Activated T-helper 1 cell treated with anti-CD3 and anti-CD28 coated beads, Interleukin-12 subunit alpha, Interleukin-12 subunit beta, Interleukin-2, Interleukin-4 antibody, amounts not matched to agents 30 ng/mL and 10 ng/mL and 1 ng/mL, durations not matched to agents 14 hours and 24 hours and 36 hours (primary cell): ENCODE measurements at regions of chr4 and their contacts with region 1.

Region 1: GRCh38 chr4:176277162-176277904 is 8.3 kb upstream of the ASB5 start:
- DNase-seq: no peak
- H3K4me3 Mint-ChIP-seq: no peak overlapping the region
- H3K27ac Mint-ChIP-seq: no peak overlapping the region
- H3K4me1 Mint-ChIP-seq: no peaks in the 10 kb centered on the region
- H3K27me3 Mint-ChIP-seq: peaks cover 7% of the 10 kb centered on the region

Region 2: DNA sequence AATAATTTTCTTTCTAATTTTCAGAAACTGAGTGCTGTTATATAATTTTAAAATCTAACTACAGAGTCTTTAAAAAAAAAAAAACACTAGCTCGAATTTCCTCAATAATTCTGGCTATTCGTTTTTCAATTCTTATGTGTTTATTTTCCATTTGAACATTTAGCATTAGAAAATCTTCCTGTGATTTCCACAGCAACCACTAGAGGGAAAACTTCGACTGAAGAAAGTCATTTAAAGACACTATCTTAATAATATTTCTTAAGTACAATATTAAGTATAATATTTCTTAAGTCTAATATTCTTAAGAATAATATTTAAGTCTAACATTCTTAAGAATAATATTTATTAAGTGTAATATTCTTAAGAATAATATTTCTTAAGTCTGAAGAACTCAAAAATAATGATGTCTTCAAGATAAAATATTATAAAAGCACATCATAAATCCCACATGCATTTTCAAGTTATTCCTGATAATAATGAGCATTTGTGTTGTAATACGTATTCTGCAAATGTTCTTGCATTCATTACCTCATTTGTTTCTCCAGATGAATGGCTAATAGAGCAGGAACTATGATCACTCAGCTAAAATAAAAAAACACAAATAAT is 330.1 kb before region 1 on chr4:
- intact Hi-C with region 1: loop called (anchors 1 kb)
- DNase-seq: no peak
- H3K4me3 Mint-ChIP-seq: no peak overlapping the region
- H3K27ac Mint-ChIP-seq: no peak overlapping the region
- H3K4me1 Mint-ChIP-seq: peaks cover 8% of the 10 kb centered on the region
- H3K27me3 Mint-ChIP-seq: peaks cover 9% of the 10 kb centered on the region

Region 3: GRCh38 chr4:176150356-176150682 is 127.0 kb before region 1 on chr4:
- intact Hi-C with region 1: loop called (anchors 1 kb)
- DNase-seq: no peak
- H3K4me3 Mint-ChIP-seq: no peak overlapping the region
- H3K27ac Mint-ChIP-seq: no peak overlapping the region
- H3K4me1 Mint-ChIP-seq: no peaks in the 10 kb centered on the region
- H3K27me3 Mint-ChIP-seq: no peaks in the 10 kb centered on the region

Region 4: GRCh38 chr4:176163041-176163440 is 114.3 kb before region 1 on chr4:
- intact Hi-C with region 1: no loop called
- DNase-seq: no peak
- H3K4me3 Mint-ChIP-seq: no peak overlapping the region
- H3K27ac Mint-ChIP-seq: no peak overlapping the region
- H3K4me1 Mint-ChIP-seq: no peaks in the 10 kb centered on the region
- H3K27me3 Mint-ChIP-seq: no peaks in the 10 kb centered on the region

Region 5: DNA sequence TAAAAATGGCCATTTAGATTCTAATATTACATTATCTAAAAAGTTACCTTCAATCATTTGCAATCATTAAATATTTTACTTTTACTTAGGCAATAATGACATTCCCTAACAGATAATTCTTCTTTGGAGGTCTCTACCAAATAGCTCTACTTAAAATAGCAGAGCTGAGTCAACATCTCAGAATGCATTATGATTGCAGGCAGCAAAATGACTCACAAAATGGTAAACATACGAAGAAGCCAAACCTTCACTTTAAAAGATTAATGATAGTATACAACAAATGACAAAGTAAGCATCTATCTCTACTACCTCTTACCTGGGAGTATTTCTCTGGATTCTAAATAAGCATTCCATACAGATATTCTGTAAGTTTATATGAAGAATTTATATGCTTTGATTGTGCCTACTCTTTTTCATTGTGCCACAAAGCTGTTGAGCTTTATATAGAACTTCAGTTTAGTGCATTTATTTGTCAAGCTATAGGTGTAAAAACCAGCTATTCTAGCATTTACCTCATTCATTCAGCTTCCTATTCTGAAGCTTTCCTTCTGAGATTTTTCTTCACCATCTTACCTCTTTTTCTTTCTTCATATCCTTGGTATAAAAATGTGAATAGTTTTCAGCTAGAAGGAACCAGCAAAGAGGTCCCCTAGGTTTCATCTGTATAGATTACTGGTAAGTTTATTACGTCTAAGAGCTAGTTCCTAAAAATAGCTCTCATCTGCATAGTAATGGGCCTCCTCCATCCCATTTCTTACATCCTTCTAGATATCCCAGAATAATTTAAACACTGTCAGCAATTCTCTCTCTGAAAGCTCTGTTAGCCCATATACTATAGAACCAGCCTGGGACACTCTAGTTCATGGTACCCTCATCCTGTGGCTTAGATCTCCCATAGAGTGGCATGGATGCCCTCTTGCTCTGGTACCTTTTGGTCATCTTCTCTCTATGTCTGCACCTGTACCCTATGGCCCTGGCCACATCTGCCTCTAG is 25.2 kb after region 1 on chr4:
- intact Hi-C with region 1: no loop called
- DNase-seq: no peak
- H3K4me3 Mint-ChIP-seq: no peak overlapping the region
- H3K27ac Mint-ChIP-seq: no peak overlapping the region
- H3K4me1 Mint-ChIP-seq: no peaks in the 10 kb centered on the region
- H3K27me3 Mint-ChIP-seq: peaks cover 8% of the 10 kb centered on the region

Region 6: GRCh38 chr4:176400816-176401461 is 123.6 kb after region 1 on chr4:
- intact Hi-C with region 1: no loop called
- DNase-seq: no peak
- H3K4me3 Mint-ChIP-seq: no peak overlapping the region
- H3K27ac Mint-ChIP-seq: no peak overlapping the region
- H3K4me1 Mint-ChIP-seq: no peaks in the 10 kb centered on the region
- H3K27me3 Mint-ChIP-seq: no peaks in the 10 kb centered on the region